ENCODE measurements at regions of chr12 and their contacts with region 1.

Region 1: DNA sequence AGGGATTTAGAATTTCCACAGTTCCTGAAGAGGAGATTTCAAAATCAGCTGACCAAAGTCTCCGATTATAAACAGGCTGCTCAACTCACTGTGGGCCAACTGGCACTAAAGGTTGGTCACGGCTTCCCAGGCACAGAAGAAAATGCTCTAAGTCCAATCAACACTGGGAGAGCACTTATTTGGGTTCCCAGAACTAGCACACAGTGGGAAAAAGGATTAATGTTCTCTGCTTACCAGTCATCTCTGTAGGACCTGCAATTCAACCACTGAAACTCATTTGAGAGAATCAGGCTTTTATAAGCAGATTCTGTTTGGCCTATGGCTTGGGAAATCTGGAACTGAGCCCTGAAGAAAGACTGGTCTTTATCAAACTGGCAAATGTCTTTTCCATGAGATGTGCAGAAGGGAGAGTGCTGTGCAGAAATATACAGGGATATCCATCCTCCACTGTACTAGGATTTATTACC is 49.4 kb downstream of the ABCC9 start:
- DNase-seq: peak; percentile 38
- H3K4me3 ChIP-seq: no peak overlapping the region
- H3K27ac ChIP-seq: peak overlapping the region; percentile 35 to 83 (median 70)
- H3K4me1 ChIP-seq: peaks cover 0 to 8% (median 3%) of the 10 kb centered on the region in 4 donors
- H3K27me3 ChIP-seq: no peaks in the 10 kb centered on the region
- CTCF ChIP-seq: no peak
- EP300 ChIP-seq: no peak
- POLR2A ChIP-seq: no peak

Region 2: GRCh38 chr12:21940549-21941505 is 49.0 kb after region 1 on chr12 and contains the start of gene ABCC9:
- in situ Hi-C with region 1: no loop called
- intact Hi-C with region 1: loop called (anchors 2 kb)
- DNase-seq: peak; percentile 13
- H3K4me3 ChIP-seq: peak within 1 kb of the TSS; percentile 0 to 48 (median 27)
- H3K27ac ChIP-seq: peak within 1 kb of the TSS; percentile 62 to 83 (median 73)
- H3K4me1 ChIP-seq: peaks cover 0 to 13% (median 2%) of the 10 kb centered on the region in 4 donors
- H3K27me3 ChIP-seq: peaks cover 48% of the 10 kb centered on the region
- CTCF ChIP-seq: no peak
- EP300 ChIP-seq: no peak
- POLR2A ChIP-seq: no peak
- total RNA-seq, gene ABCC9: 5.2 to 10.2 (median 8.0) TPM

Measured in transverse colon (tissue), 4 donors.